ENCODE measurements at regions of chr9 and their contacts with region 1.

Region 1: DNA sequence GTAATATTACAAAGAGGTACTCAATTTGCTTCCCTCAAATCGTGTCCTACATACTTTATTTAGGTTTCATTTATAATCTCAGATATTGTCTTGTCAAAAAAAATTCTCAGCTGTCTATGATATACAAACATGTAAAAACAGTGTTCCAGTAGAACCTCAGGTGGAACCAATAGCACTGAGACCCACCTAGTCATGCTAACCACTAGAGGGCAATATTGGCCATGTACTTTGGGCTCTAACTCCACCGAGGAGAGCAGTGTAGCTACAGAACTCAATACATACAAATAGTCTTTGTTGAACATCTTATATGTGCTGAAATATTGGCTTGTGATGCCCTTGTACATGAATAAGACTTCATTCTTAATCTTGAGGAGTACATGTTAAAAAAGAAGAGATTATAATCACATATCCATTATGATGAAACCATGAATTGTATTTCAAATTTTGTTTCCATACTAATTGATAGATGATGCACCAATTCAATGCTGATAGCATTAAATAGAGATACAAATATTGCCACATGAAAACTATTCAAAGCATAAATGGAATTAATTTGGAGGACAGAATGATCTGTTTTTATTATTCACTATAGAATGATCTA is 71.2 kb upstream of the CNTLN start:
- DNase-seq: peak; percentile 70
- ATAC-seq: peak; percentile 76
- H3K4me3 ChIP-seq: no peak overlapping the region
- H3K27ac ChIP-seq: no peak overlapping the region
- H3K4me1 ChIP-seq: peaks cover 15% of the 10 kb centered on the region
- H3K27me3 ChIP-seq: no peaks in the 10 kb centered on the region
- CTCF ChIP-seq: peak; percentile 84

Region 2: DNA sequence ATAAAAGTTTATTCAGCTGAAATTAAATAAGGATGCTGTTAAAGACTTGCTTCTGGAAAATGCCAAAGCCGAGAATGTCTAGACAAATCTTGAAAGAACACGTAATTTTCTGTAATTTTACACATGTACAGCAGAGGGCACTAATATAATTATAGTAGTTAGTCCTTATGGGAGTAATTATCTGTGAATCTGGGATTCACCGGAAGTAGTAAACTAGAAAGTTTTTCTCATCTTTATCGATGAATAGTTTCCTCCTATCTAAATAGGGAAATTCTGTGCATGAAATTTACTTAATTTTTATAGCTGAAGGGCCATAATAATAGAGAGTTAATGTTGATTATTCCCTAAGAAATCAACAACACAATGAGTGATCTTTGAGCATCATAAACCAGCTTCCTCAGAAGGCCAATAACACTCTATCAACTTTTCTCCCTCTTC is 52.8 kb after region 1 on chr9:
- CTCF ChIA-PET with region 1: interaction called, 3 read pairs
- POLR2A ChIA-PET with region 1: no interaction called
- intact Hi-C with region 1: loop called (anchors 2 kb)
- DNase-seq: peak; percentile 60
- ATAC-seq: no peak
- H3K4me3 ChIP-seq: no peak overlapping the region
- H3K27ac ChIP-seq: no peak overlapping the region
- H3K4me1 ChIP-seq: no peaks in the 10 kb centered on the region
- H3K27me3 ChIP-seq: no peaks in the 10 kb centered on the region
- CTCF ChIP-seq: peak; percentile 64

Region 3: GRCh38 chr9:17171309-17172094 is 107.9 kb after region 1 on chr9:
- CTCF ChIA-PET with region 1: no interaction called
- POLR2A ChIA-PET with region 1: no interaction called
- intact Hi-C with region 1: no loop called
- DNase-seq: no peak
- ATAC-seq: no peak
- H3K4me3 ChIP-seq: no peak overlapping the region
- H3K27ac ChIP-seq: no peak overlapping the region
- H3K4me1 ChIP-seq: no peaks in the 10 kb centered on the region
- H3K27me3 ChIP-seq: no peaks in the 10 kb centered on the region
- CTCF ChIP-seq: no peak